Heart left ventricle (tissue), 16 donors: ENCODE measurements at regions of chr12 and their contacts with region 1.

Region 1: GRCh38 chr12:32671930-32672780 is 6.9 kb upstream of the DNM1L start:
- DNase-seq: peak in 2 of 5 donors; percentile 53 to 55
- ATAC-seq: peak; percentile 50 to 91 (median 84)
- H3K4me3 ChIP-seq: no peak overlapping the region
- H3K27ac ChIP-seq: no peak overlapping the region
- H3K4me1 ChIP-seq: peaks cover 0 to 10% (median 0%) of the 10 kb centered on the region in 12 donors
- H3K27me3 ChIP-seq: no peaks in the 10 kb centered on the region
- CTCF ChIP-seq: peak; percentile 34 to 79 (median 61)
- POLR2A ChIP-seq: no peak

Region 2: DNA sequence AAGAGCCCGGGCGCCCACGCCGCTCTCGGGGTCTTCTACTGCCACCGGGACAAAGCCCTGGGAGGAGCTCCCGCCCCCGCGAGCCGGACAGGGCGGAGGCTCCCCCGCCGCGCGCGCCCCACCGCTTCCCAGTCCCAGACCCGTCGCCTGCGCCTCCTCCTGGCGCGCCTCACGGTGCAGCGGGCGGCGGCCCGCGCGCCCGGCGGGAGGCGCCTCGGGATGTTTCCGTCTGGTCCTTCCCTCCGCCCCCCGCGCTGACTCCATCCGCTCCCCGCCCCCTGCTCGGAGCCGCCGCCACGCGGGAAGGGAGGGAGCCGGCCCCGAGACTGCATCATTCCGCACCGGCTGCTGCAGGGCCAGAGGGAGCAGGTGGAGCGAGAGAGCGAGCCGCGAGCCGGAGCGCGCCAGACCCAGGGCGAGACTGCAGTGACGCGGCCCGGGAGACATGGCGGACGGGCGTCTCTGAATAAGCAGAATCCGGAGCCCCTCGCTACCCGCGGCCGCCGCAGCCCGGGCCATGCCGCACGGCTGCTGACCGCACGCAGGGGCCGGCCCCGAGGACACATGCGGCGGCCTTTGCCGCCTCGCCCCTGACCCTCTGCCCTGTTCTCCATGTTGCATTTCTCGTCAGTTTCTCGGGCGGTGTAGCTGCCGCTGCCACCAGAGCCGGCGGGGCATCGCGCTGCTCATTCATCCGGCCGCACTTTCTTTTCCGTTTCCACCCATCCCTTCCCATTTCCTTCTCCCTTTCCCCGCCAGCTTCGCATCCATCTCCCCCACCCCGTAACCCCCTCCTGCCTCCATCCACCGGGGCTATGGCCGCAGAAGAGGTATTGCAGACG is 565.4 kb before region 1 on chr12 and contains the start of gene BICD1:
- intact Hi-C with region 1: loop called in 1 of 10 experiments (anchors 5 kb)
- DNase-seq: peak; percentile 93 to 95 (median 93)
- ATAC-seq: peak; percentile 88 to 98 (median 98)
- H3K4me3 ChIP-seq: peak within 1 kb of the TSS; percentile 68 to 98 (median 89)
- H3K27ac ChIP-seq: peak within 1 kb of the TSS; percentile 63 to 96 (median 86)
- H3K4me1 ChIP-seq: peaks cover 0 to 50% (median 27%) of the 10 kb centered on the region in 12 donors
- H3K27me3 ChIP-seq: no peaks in the 10 kb centered on the region
- CTCF ChIP-seq: peak in 10 of 12 donors; percentile 13 to 75 (median 49)
- POLR2A ChIP-seq: peak in 1 of 2 donors; percentile 88
- total RNA-seq, gene BICD1: 2.1 to 16.3 (median 8.9) TPM